A549 (cell line): ENCODE measurements at regions of chr9 and their contacts with region 1.

Region 1: GRCh38 chr9:124420991-124421543 is 5.8 kb upstream of the PSMB7 start:
- DNase-seq: peak in 1 of 2 experiments; percentile 44
- ATAC-seq: no peak; a peak in 1 of 6 replicates
- H3K4me3 ChIP-seq: no peak overlapping the region
- H3K27ac ChIP-seq: no peak overlapping the region
- H3K4me1 ChIP-seq: no peaks in the 10 kb centered on the region
- CTCF ChIP-seq: no peak
- EP300 ChIP-seq: no peak
- POLR2A ChIP-seq: no peak
- RAD21 ChIP-seq: no peak

Region 2: GRCh38 chr9:124320062-124320973 is 100.7 kb before region 1 on chr9:
- CTCF ChIA-PET with region 1: no interaction called
- POLR2A ChIA-PET with region 1: no interaction called
- DNase-seq: peak; percentile 64 to 91
- ATAC-seq: peak; percentile 91 to 95
- H3K4me3 ChIP-seq: no peak overlapping the region
- H3K27ac ChIP-seq: peak overlapping the region; percentile 46 to 70; a peak in 4 of 6 replicates
- H3K4me1 ChIP-seq: 0 out of 3 replicates have a peak, but pooled peaks cover 3% of the 10 kb centered on the region
- CTCF ChIP-seq: peak; percentile 78
- EP300 ChIP-seq: no peak
- POLR2A ChIP-seq: no peak
- RAD21 ChIP-seq: peak; percentile 70 to 74

Region 3: DNA sequence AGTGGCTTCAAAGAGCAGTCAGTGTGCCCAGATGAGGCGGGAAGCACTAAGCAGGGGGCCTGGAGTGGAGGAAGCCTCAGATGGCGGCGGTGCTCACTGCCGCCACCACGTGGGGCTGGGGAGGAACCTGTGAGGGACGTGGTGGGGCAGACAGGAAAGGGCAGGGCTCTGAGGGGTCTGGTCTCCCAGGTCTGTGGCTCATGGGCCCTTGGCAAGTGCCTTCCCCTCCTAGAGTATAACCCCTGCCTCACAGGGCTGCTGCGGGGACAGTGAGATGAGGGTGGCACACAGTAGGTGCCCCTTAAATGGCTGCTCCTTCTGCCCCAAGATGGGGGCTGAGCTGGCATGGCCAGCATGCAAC is 59.5 kb after region 1 on chr9:
- CTCF ChIA-PET with region 1: interaction called, 25 read pairs
- POLR2A ChIA-PET with region 1: no interaction called
- DNase-seq: peak; percentile 53 to 92
- ATAC-seq: peak; percentile 62 to 85
- H3K4me3 ChIP-seq: no peak overlapping the region
- H3K27ac ChIP-seq: no peak overlapping the region
- H3K4me1 ChIP-seq: peaks cover 7% of the 10 kb centered on the region; the same call in 2 of the 3 replicates
- CTCF ChIP-seq: peak; percentile 61
- EP300 ChIP-seq: no peak
- POLR2A ChIP-seq: no peak
- RAD21 ChIP-seq: peak; percentile 23 to 52; a peak in 2 of 5 replicates